IMR-90 (cell line): ENCODE measurements at regions of chr22 and their contacts with region 1.

Region 1: GRCh38 chr22:19679522-19680101 is 34.7 kb upstream of the SEPTIN5 start:
- DNase-seq: no peak
- ATAC-seq: peak; percentile 69
- H3K4me3 ChIP-seq: no peak overlapping the region
- H3K27ac ChIP-seq: no peak overlapping the region
- H3K4me1 ChIP-seq: no peaks in the 10 kb centered on the region; the same call in 1 of the 2 replicates
- H3K27me3 ChIP-seq: peaks cover 16% of the 10 kb centered on the region
- CTCF ChIP-seq: peak; percentile 52
- POLR2A ChIP-seq: no peak
- RAD21 ChIP-seq: peak; percentile 41

Region 2: GRCh38 chr22:19244600-19245352 is 434.8 kb before region 1 on chr22:
- CTCF ChIA-PET with region 1: no interaction called
- POLR2A ChIA-PET with region 1: no interaction called
- dilution Hi-C with region 1: no loop called
- in situ Hi-C with region 1: no loop called
- intact Hi-C with region 1: no loop called
- DNase-seq: no peak
- ATAC-seq: no peak
- H3K4me3 ChIP-seq: no peak overlapping the region
- H3K27ac ChIP-seq: no peak overlapping the region
- H3K4me1 ChIP-seq: no peaks in the 10 kb centered on the region
- H3K27me3 ChIP-seq: no peaks in the 10 kb centered on the region
- CTCF ChIP-seq: no peak
- POLR2A ChIP-seq: no peak
- RAD21 ChIP-seq: no peak

Region 3: DNA sequence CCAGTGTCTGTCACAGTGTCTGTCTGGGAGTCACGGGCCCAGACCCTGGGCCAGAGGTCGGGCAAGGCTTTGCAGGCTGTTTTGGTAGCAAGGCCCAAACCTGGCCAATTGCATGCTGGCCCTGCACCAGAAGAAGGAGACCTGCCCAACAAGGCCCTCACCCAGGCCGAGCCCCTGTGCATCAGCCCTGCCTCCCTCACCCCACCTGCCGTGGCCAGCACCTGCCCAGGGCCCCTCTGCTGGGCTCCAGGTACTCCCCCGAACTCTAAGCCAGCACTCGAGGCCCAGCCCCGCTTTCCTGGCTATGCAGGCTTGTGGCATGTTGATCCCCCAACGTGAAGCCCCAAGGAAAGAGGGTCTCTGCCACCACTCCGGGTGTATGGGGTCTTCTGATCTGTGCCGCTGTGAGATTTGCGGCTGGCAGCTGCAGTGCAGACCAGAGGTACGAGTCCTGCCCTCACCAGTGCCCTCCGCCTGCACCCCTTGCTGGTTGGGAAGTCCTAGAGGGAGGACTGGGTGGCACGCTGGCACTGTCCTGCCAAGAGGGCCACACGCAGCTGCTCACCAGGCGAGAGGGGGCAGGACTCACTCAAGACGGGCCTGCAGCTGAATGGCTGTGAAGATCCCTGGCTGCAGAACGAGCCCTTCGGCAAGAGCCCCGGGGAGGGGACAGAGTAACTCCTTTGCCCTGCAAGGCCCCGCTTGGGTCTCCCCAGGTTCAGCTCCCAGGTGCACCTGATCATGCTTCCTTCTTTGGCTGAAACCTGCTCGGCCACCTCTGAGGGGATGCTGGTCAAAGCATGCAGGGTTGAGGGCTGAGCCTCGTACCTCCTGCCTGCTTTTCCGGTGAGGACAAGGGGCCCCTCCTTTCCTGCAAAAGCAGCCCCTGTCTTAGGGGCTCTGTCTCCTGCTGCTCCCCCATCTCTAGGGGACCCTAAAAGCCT is 28.0 kb after region 1 on chr22:
- CTCF ChIA-PET with region 1: no interaction called
- POLR2A ChIA-PET with region 1: no interaction called
- dilution Hi-C with region 1: no loop called
- in situ Hi-C with region 1: no loop called
- intact Hi-C with region 1: no loop called
- DNase-seq: no peak
- ATAC-seq: no peak
- H3K4me3 ChIP-seq: no peak overlapping the region
- H3K27ac ChIP-seq: no peak overlapping the region
- H3K4me1 ChIP-seq: no peaks in the 10 kb centered on the region
- H3K27me3 ChIP-seq: peaks cover 46% of the 10 kb centered on the region
- CTCF ChIP-seq: no peak
- POLR2A ChIP-seq: no peak
- RAD21 ChIP-seq: no peak

Region 4: DNA sequence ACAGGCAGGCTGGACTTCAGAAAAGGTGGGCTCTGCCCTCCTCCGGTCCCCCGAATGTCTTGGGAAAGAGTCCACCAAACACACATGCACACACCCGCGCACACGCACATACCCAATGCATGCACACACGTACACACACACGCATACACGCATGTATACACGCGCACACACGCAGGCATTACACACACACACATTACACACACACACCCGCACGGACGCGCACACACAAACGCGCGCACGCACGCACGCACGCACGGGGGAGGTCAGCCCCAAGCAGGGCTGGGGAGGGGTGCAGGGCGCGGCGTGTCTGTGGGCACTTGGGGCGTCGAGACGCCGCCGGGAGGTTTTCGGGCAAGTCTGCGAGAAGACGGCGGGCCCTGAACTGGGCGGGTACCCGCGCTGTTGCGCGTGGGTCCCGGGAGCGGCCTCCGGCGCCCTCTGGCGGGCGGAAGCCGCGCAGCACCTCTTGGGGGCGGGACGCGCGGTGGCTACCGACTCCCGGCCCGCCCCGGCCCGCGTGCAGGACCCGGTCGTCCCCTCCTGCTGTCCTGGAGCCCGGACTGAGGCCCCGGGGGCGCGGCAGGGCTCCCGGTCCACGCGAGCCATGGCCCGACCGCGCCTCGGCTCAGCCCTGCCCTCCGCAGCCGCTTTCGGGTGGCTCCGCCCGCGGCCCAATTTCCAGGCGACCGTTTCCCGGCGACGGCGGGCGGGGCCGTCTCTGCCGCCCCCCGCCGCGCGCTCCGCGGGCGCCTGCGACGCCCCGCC is 38.3 kb after region 1 on chr22:
- CTCF ChIA-PET with region 1: no interaction called
- POLR2A ChIA-PET with region 1: no interaction called
- dilution Hi-C with region 1: no loop called
- in situ Hi-C with region 1: no loop called
- intact Hi-C with region 1: loop called (anchors 1 kb)
- DNase-seq: peak; percentile 52
- ATAC-seq: peak; percentile 90
- H3K4me3 ChIP-seq: peak overlapping the region; percentile 71
- H3K27ac ChIP-seq: peak overlapping the region; percentile 19; the same call in 1 of the 2 replicates
- H3K4me1 ChIP-seq: peaks cover 15% of the 10 kb centered on the region
- H3K27me3 ChIP-seq: peaks cover 16% of the 10 kb centered on the region
- CTCF ChIP-seq: peak; percentile 95
- POLR2A ChIP-seq: no peak
- RAD21 ChIP-seq: peak; percentile 87

Region 5: GRCh38 chr22:20405931-20406685 is 726.5 kb after region 1 on chr22:
- CTCF ChIA-PET with region 1: no interaction called
- POLR2A ChIA-PET with region 1: no interaction called
- dilution Hi-C with region 1: no loop called
- in situ Hi-C with region 1: no loop called
- intact Hi-C with region 1: no loop called
- DNase-seq: no peak
- ATAC-seq: no peak
- H3K4me3 ChIP-seq: no peak overlapping the region
- H3K27ac ChIP-seq: no peak overlapping the region
- H3K4me1 ChIP-seq: no peaks in the 10 kb centered on the region
- H3K27me3 ChIP-seq: no peaks in the 10 kb centered on the region
- CTCF ChIP-seq: no peak
- POLR2A ChIP-seq: no peak
- RAD21 ChIP-seq: no peak